Pancreas (tissue), 10 donors: ENCODE measurements at regions of chr5 and their contacts with region 1.

Region 1: DNA sequence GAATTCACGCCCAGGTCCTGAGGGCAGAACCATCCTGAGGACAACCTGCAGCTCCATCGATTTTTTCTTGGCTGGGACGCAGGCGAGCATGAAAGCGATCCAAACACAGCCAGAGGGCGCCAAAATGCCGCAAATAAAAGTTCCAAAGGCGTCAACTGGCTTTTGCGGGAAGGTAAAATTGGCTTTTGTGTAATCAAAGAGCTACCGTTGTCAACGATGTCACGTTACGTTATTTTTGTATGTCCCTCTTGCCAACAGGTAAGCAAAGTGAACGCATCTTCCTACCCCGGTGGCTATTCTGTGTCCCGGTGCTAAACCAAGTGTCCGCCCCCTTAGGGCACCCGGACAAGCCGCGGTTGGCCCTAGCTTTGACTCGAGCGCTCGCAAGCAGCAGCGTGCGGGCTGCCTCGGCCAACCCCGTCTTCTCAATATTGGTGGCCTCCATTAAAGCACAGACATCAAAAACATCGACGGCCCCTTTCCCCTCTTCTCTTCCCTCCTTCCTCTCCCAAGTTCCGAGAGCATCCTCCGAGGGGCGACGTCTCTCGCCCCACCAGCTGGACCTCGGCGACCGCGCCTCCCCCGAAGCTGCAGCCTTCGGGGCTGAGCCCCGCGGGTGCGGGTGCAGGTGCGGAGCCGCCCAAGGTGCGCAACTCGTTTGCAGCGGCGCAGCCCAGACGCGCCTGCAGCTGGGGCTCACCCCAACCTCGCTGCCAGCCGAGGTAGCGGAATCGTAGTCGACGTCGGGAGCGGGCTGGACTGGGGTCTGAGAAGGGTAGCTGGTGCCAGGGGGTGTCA is 1.1 kb upstream of the BASP1 start:
- DNase-seq: peak; percentile 70 to 84 (median 78)
- ATAC-seq: peak; percentile 85 to 92 (median 86)
- H3K4me3 ChIP-seq: peak overlapping the region in 1 of 4 donors; percentile 6
- H3K27ac ChIP-seq: no peak overlapping the region
- H3K4me1 ChIP-seq: no peaks in the 10 kb centered on the region
- H3K27me3 ChIP-seq: peaks cover 0 to 14% (median under 1%) of the 10 kb centered on the region in 4 donors
- CTCF ChIP-seq: peak; percentile 32 to 64 (median 54)

Region 2: DNA sequence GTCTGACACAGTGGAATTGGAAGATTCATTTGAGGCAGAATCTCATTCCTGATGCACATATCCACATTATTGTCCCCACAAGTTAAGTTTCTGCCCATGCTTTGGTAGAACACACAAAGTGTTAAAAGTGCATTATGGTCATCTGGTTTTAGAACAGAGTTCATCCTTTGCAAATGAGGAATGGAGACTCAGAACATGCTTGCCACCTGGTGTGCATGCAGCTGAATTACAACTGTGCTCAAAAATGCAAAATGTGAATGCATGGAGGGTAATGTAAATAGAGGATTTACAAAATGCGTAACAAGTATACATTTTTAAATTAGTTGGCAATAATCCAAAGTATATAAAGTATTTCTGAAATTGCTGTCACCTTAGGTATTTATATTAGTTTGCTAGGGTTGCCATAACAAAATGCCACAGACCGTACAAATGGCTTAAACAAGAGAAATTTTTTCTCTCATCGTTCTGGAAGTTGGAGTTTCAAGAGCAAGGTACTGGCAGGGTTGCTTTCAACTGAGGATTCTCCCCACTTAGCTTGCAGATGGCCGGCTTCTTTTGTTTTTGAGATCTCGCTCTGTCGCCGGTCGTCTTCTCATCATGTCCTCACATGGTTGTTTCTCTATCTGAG is 1089.0 kb after region 1 on chr5:
- intact Hi-C with region 1: loop called in 2 of 3 experiments (anchors 5 to 10 kb)
- DNase-seq: peak in 1 of 6 donors; percentile 31
- ATAC-seq: peak; percentile 55 to 82 (median 78)
- H3K4me3 ChIP-seq: no peak overlapping the region
- H3K27ac ChIP-seq: no peak overlapping the region
- H3K4me1 ChIP-seq: no peaks in the 10 kb centered on the region
- H3K27me3 ChIP-seq: peaks cover 0 to 5% (median 0%) of the 10 kb centered on the region in 4 donors
- CTCF ChIP-seq: peak; percentile 13 to 62 (median 50)

Region 3: DNA sequence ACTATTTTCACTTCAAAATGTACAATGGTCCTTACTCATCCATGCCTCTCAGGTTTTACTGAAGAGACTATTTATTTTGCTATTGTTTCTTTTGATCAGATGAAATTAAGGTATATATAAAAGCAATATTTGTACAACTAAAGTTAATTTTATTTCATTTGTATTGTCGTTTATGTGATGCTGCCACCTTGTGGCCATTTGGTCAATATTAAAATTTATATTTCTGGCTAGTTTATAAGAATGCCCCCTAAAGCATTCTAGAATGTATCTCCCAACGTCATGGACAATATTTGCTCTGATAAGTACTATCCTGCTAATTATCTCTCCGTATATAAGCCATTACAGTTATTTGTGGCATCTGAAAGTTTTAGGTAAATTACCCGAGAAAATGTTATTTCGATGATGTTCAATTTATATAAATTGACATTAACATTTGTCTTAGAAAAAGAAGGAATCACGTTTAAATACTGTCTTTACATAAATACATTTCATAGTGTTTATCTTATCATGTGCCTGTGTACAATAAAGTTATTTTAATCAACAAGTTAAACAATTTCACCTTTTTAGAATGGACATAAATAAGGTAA is 1097.9 kb after region 1 on chr5:
- intact Hi-C with region 1: loop called in 1 of 3 experiments (anchors 10 kb)
- DNase-seq: no peak
- ATAC-seq: no peak
- H3K4me3 ChIP-seq: no peak overlapping the region
- H3K27ac ChIP-seq: no peak overlapping the region
- H3K4me1 ChIP-seq: no peaks in the 10 kb centered on the region
- H3K27me3 ChIP-seq: no peaks in the 10 kb centered on the region
- CTCF ChIP-seq: peak in 3 of 4 donors; percentile 17 to 52 (median 45)